ENCODE measurements at regions of chr1 and their contacts with region 1.

Region 1: DNA sequence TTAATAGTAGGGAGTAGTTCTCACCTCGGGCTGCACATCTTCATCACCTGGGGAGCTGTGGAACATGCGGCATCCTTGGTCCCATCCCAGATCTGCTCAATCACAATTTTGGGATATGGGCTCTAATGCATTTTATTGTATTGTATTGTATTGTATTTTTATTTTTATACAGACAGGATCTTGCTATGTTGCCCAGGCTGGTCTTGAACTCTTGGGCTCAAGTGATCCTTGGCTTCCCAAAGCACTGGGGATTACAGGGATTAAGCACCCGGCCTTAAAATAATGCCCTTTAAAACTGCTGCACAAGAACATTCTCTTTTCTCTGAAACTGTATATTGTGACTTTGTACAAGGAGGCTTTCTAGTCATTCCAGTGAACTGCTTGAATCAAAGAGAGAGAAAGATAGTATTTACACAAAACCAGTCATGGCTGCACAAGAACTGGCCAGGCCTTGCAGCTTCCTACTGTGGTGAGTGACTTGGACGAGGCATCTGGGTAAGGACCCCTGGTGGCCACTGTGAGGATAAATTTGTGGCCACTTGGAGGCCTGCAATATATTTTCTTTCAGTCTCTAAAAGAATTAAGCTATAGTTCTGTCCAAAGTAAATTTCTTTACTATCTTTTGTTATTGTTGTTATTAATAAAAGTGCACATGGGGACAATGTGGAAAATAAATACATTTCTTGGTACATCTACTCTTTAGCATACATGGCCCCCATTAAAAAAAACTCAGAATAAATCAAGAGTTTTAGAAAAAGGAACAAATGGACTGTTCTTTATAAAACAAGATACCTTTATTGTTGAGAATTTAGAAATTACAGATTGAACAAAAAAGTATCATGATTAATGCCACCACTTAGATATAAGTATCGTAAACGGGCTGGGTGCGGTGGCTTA is 48.0 kb downstream of the TBCE start:
- DNase-seq: peak; percentile 24 to 75 (median 53)
- ATAC-seq: peak; percentile 69
- H3K4me3 ChIP-seq: no peak overlapping the region
- H3K4me3 Mint-ChIP-seq: no peak overlapping the region
- H3K27ac ChIP-seq: no peak overlapping the region
- H3K27ac Mint-ChIP-seq: no peak overlapping the region
- H3K4me1 ChIP-seq: no peaks in the 10 kb centered on the region
- H3K4me1 Mint-ChIP-seq: peaks cover 10% of the 10 kb centered on the region
- H3K27me3 ChIP-seq: no peaks in the 10 kb centered on the region
- H3K27me3 Mint-ChIP-seq: no peaks in the 10 kb centered on the region
- CTCF ChIP-seq: peak; percentile 77

Region 2: DNA sequence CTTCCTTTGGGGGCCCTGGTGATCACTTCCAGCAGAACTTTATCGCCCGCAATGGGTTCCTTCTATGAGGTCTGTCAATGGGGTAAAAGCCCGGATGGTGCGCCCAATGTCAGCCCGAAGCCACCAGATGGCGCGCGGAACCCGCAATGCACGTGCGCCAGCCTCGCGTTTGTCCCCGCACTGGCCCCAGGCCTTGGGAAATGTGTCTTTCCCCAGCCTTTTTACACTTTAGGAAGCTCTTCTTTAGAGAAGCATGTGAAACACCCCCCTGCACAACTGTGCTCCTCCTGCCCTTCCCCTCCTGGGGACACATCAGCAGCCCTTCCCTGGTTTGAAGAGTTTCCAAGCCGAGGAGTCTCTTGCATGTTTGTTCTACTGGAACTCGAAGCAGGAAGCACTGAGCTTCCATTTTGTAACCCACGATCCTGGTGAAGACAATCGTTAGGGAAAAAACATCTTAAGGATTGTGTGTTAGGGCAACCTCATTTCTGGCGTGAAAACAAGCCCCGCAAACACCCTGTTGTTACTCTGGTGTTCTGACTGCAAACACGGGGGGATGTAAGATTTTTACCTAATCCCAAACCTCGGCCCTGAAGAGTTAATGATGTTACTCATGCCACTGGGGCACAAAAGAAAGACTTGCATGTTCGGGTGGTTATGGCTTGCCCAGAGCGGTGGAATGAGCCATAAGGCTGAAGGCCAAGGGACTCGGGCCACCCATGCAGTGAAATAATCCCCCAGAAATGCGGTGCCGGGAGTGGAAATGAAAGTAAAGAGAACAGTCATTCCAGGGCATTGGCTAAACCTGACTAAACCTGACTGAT is 915.9 kb before region 1 on chr1:
- CTCF ChIA-PET with region 1: no interaction called
- POLR2A ChIA-PET with region 1: no interaction called
- intact Hi-C with region 1: loop called (anchors 1 to 5 kb)
- DNase-seq: peak; percentile 65 to 90 (median 81)
- ATAC-seq: peak; percentile 98
- H3K4me3 ChIP-seq: no peak overlapping the region
- H3K4me3 Mint-ChIP-seq: no peak overlapping the region
- H3K27ac ChIP-seq: no peak overlapping the region
- H3K27ac Mint-ChIP-seq: no peak overlapping the region
- H3K4me1 ChIP-seq: no peaks in the 10 kb centered on the region
- H3K4me1 Mint-ChIP-seq: peaks cover 8% of the 10 kb centered on the region
- H3K27me3 ChIP-seq: no peaks in the 10 kb centered on the region
- H3K27me3 Mint-ChIP-seq: peaks cover 4% of the 10 kb centered on the region
- CTCF ChIP-seq: peak; percentile 80

Region 3: GRCh38 chr1:235105051-235106043 is 309.9 kb before region 1 on chr1:
- CTCF ChIA-PET with region 1: interaction called, 51 read pairs
- POLR2A ChIA-PET with region 1: no interaction called
- intact Hi-C with region 1: loop called (anchors 1 kb)
- DNase-seq: peak in 3 of 9 experiments; percentile 36 to 76 (median 57)
- ATAC-seq: peak; percentile 44
- H3K4me3 ChIP-seq: peak overlapping the region in 1 of 2 experiments; percentile 35
- H3K4me3 Mint-ChIP-seq: peak overlapping the region; percentile 79
- H3K27ac ChIP-seq: peak overlapping the region in 1 of 2 experiments; percentile 27
- H3K27ac Mint-ChIP-seq: peak overlapping the region; percentile 86
- H3K4me1 ChIP-seq: peaks cover 20% of the 10 kb centered on the region
- H3K4me1 Mint-ChIP-seq: peaks cover 35% of the 10 kb centered on the region
- H3K27me3 ChIP-seq: no peaks in the 10 kb centered on the region
- H3K27me3 Mint-ChIP-seq: no peaks in the 10 kb centered on the region
- CTCF ChIP-seq: no peak

Region 4: GRCh38 chr1:235253219-235253962 is 161.9 kb before region 1 on chr1:
- CTCF ChIA-PET with region 1: interaction called, 53 read pairs
- POLR2A ChIA-PET with region 1: no interaction called
- intact Hi-C with region 1: loop called (anchors 1 kb)
- DNase-seq: peak; percentile 36 to 83 (median 66)
- ATAC-seq: peak; percentile 97
- H3K4me3 ChIP-seq: no peak overlapping the region
- H3K4me3 Mint-ChIP-seq: no peak overlapping the region
- H3K27ac ChIP-seq: no peak overlapping the region
- H3K27ac Mint-ChIP-seq: no peak overlapping the region
- H3K4me1 ChIP-seq: peaks cover 6% of the 10 kb centered on the region
- H3K4me1 Mint-ChIP-seq: peaks cover 33% of the 10 kb centered on the region
- H3K27me3 ChIP-seq: no peaks in the 10 kb centered on the region
- H3K27me3 Mint-ChIP-seq: no peaks in the 10 kb centered on the region
- CTCF ChIP-seq: peak; percentile 97

Region 5: DNA sequence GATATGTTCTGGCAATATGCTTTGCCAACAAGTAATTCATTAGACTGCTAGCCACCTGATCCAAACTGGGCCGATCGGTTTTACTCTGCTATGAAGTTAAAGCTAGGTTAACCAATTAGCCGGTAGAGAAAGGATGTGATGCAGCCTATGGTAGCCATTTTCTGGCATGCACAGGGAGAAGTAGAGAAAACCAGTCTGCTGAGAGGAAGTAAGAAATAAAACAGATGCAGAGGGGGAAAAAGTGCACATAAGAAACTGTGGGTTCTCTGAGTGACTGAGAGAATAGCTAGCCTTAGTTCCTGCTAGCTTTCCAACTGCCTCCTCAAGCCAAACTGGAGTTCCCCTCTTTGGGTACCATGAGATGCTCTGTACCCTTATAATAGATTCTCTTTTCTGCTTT is 140.0 kb before region 1 on chr1:
- CTCF ChIA-PET with region 1: interaction called, 15 read pairs
- POLR2A ChIA-PET with region 1: no interaction called
- intact Hi-C with region 1: no loop called
- DNase-seq: peak in 2 of 9 experiments; percentile 17 to 51
- ATAC-seq: peak; percentile 53
- H3K4me3 ChIP-seq: no peak overlapping the region
- H3K4me3 Mint-ChIP-seq: peak overlapping the region; percentile 23
- H3K27ac ChIP-seq: peak overlapping the region in 1 of 2 experiments; percentile 34
- H3K27ac Mint-ChIP-seq: peak overlapping the region; percentile 57
- H3K4me1 ChIP-seq: peaks cover 53% of the 10 kb centered on the region
- H3K4me1 Mint-ChIP-seq: peaks cover 80% of the 10 kb centered on the region
- H3K27me3 ChIP-seq: no peaks in the 10 kb centered on the region
- H3K27me3 Mint-ChIP-seq: no peaks in the 10 kb centered on the region
- CTCF ChIP-seq: no peak

Region 6: DNA sequence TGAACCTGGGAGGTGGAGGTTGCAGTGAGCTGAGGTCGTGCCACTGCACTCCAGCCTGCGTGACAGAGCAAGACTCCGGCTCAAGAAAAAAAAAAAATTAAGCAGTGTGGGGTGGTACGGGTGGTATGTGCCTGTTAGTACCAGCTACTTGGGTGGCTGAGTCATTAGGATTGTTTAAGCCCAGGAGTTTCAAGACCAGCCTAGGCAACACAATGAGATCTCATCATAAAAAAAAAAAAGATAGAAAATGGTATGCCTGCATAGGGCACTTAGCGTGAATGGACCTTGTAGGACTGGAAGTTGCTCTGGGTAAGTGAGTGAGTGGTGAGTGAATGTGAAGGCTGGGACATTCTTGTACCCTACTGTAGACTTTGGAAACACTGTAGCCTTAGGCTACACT is 11.1 kb before region 1 on chr1:
- CTCF ChIA-PET with region 1: interaction called, 17 read pairs
- POLR2A ChIA-PET with region 1: no interaction called
- intact Hi-C with region 1: no loop called
- DNase-seq: no peak
- ATAC-seq: no peak
- H3K4me3 ChIP-seq: no peak overlapping the region
- H3K4me3 Mint-ChIP-seq: no peak overlapping the region
- H3K27ac ChIP-seq: no peak overlapping the region
- H3K27ac Mint-ChIP-seq: no peak overlapping the region
- H3K4me1 ChIP-seq: no peaks in the 10 kb centered on the region
- H3K4me1 Mint-ChIP-seq: peaks cover 8% of the 10 kb centered on the region
- H3K27me3 ChIP-seq: no peaks in the 10 kb centered on the region
- H3K27me3 Mint-ChIP-seq: no peaks in the 10 kb centered on the region
- CTCF ChIP-seq: no peak

Region 7: GRCh38 chr1:235460770-235461169 is 45.5 kb after region 1 on chr1:
- CTCF ChIA-PET with region 1: no interaction called
- POLR2A ChIA-PET with region 1: no interaction called
- intact Hi-C with region 1: no loop called
- DNase-seq: no peak
- ATAC-seq: no peak
- H3K4me3 ChIP-seq: no peak overlapping the region
- H3K4me3 Mint-ChIP-seq: no peak overlapping the region
- H3K27ac ChIP-seq: no peak overlapping the region
- H3K27ac Mint-ChIP-seq: no peak overlapping the region
- H3K4me1 ChIP-seq: no peaks in the 10 kb centered on the region
- H3K4me1 Mint-ChIP-seq: peaks cover 12% of the 10 kb centered on the region
- H3K27me3 ChIP-seq: no peaks in the 10 kb centered on the region
- H3K27me3 Mint-ChIP-seq: no peaks in the 10 kb centered on the region
- CTCF ChIP-seq: no peak

Measured in CD8-positive, alpha-beta T cell (primary cell).